Activated CD4-positive, alpha-beta memory T cell treated with anti-CD3 and anti-CD28 coated beads, Interleukin-2, amount 10 ng/mL, durations not matched to agents 7 days and 5 days (primary cell): ENCODE measurements at regions of chr3 and their contacts with region 1.

Region 1: GRCh38 chr3:15268033-15268631 is 62.1 kb downstream of the CAPN7 start:
- DNase-seq: peak; percentile 87
- H3K4me3 Mint-ChIP-seq: no peak overlapping the region
- H3K27ac Mint-ChIP-seq: peak overlapping the region; percentile 24
- H3K4me1 Mint-ChIP-seq: peaks cover 68% of the 10 kb centered on the region
- H3K27me3 Mint-ChIP-seq: no peaks in the 10 kb centered on the region

Region 2: DNA sequence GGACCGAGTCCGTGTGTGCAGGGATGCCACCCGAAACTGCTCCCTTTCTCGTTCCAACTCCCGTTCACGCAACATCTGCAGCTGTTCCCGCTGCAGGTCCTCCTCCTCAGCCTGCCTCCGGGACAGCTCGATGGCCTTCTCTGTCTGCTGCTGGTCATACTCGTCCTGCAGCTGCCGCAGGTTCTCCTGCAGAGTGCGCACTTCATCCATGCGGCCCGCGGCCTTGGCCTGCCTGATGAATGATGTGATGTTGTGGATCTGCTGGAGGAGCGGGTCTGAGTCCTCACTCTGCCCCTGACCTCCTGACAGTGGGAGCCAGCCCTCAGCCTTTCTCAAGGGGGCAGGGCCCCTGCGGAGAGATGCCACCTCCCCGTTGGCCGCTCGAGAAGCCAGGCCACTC is 193.6 kb before region 1 on chr3:
- CTCF ChIA-PET with region 1: no interaction called
- POLR2A ChIA-PET with region 1: no interaction called
- DNase-seq: no peak
- H3K4me3 Mint-ChIP-seq: no peak overlapping the region
- H3K27ac Mint-ChIP-seq: no peak overlapping the region
- H3K4me1 Mint-ChIP-seq: peaks cover 2% of the 10 kb centered on the region
- H3K27me3 Mint-ChIP-seq: no peaks in the 10 kb centered on the region

Region 3: GRCh38 chr3:15159501-15160136 is 108.5 kb before region 1 on chr3:
- CTCF ChIA-PET with region 1: no interaction called
- POLR2A ChIA-PET with region 1: no interaction called
- DNase-seq: no peak
- H3K4me3 Mint-ChIP-seq: no peak overlapping the region
- H3K27ac Mint-ChIP-seq: no peak overlapping the region
- H3K4me1 Mint-ChIP-seq: peaks cover 6% of the 10 kb centered on the region
- H3K27me3 Mint-ChIP-seq: peaks cover 26% of the 10 kb centered on the region

Region 4: GRCh38 chr3:15291589-15292541 is 23.7 kb after region 1 on chr3:
- CTCF ChIA-PET with region 1: interaction called, 15 read pairs
- POLR2A ChIA-PET with region 1: interaction called, 44 read pairs
- DNase-seq: peak; percentile 80
- H3K4me3 Mint-ChIP-seq: peak overlapping the region; percentile 58
- H3K27ac Mint-ChIP-seq: peak overlapping the region; percentile 96
- H3K4me1 Mint-ChIP-seq: peaks cover 80% of the 10 kb centered on the region
- H3K27me3 Mint-ChIP-seq: no peaks in the 10 kb centered on the region

Region 5: GRCh38 chr3:15309662-15310335 is 41.7 kb after region 1 on chr3:
- CTCF ChIA-PET with region 1: interaction called, 25 read pairs
- POLR2A ChIA-PET with region 1: interaction called, 20 read pairs
- DNase-seq: no peak
- H3K4me3 Mint-ChIP-seq: peak overlapping the region; percentile 19
- H3K27ac Mint-ChIP-seq: peak overlapping the region; percentile 89
- H3K4me1 Mint-ChIP-seq: peaks cover 71% of the 10 kb centered on the region
- H3K27me3 Mint-ChIP-seq: no peaks in the 10 kb centered on the region

Region 6: GRCh38 chr3:15345608-15346137 is 77.5 kb after region 1 on chr3:
- CTCF ChIA-PET with region 1: interaction called, 14 read pairs
- POLR2A ChIA-PET with region 1: interaction called, 4 read pairs
- DNase-seq: no peak
- H3K4me3 Mint-ChIP-seq: no peak overlapping the region
- H3K27ac Mint-ChIP-seq: no peak overlapping the region
- H3K4me1 Mint-ChIP-seq: peaks cover 34% of the 10 kb centered on the region
- H3K27me3 Mint-ChIP-seq: peaks cover 8% of the 10 kb centered on the region

Region 7: GRCh38 chr3:15377961-15378791 is 110.0 kb after region 1 on chr3:
- CTCF ChIA-PET with region 1: interaction called, 111 read pairs
- POLR2A ChIA-PET with region 1: interaction called, 7 read pairs
- DNase-seq: peak; percentile 97
- H3K4me3 Mint-ChIP-seq: no peak overlapping the region
- H3K27ac Mint-ChIP-seq: peak overlapping the region; percentile 73
- H3K4me1 Mint-ChIP-seq: peaks cover 8% of the 10 kb centered on the region
- H3K27me3 Mint-ChIP-seq: no peaks in the 10 kb centered on the region

Region 8: GRCh38 chr3:15557511-15557946 is 289.4 kb after region 1 on chr3:
- CTCF ChIA-PET with region 1: interaction called, 36 read pairs
- POLR2A ChIA-PET with region 1: no interaction called
- DNase-seq: peak; percentile 81
- H3K4me3 Mint-ChIP-seq: no peak overlapping the region
- H3K27ac Mint-ChIP-seq: peak overlapping the region; percentile 66
- H3K4me1 Mint-ChIP-seq: peaks cover 22% of the 10 kb centered on the region
- H3K27me3 Mint-ChIP-seq: no peaks in the 10 kb centered on the region